ENCODE measurements at regions of chr3 and their contacts with region 1.

Region 1: GRCh38 chr3:24004171-24004938 is 59.3 kb downstream of the NR1D2 start:
- ATAC-seq: no peak
- H3K4me3 ChIP-seq: no peak overlapping the region
- H3K27ac ChIP-seq: no peak overlapping the region
- H3K4me1 ChIP-seq: no peaks in the 10 kb centered on the region

Region 2: GRCh38 chr3:24237971-24238767 is 233.8 kb after region 1 on chr3:
- in situ Hi-C with region 1: loop called in 3 of 9 experiments (anchors 10 to 25 kb)
- ATAC-seq: peak; percentile 76 to 90 (median 78)
- H3K4me3 ChIP-seq: no peak overlapping the region
- H3K27ac ChIP-seq: no peak overlapping the region
- H3K4me1 ChIP-seq: peaks cover 10% of the 10 kb centered on the region in 2 donors

Region 3: DNA sequence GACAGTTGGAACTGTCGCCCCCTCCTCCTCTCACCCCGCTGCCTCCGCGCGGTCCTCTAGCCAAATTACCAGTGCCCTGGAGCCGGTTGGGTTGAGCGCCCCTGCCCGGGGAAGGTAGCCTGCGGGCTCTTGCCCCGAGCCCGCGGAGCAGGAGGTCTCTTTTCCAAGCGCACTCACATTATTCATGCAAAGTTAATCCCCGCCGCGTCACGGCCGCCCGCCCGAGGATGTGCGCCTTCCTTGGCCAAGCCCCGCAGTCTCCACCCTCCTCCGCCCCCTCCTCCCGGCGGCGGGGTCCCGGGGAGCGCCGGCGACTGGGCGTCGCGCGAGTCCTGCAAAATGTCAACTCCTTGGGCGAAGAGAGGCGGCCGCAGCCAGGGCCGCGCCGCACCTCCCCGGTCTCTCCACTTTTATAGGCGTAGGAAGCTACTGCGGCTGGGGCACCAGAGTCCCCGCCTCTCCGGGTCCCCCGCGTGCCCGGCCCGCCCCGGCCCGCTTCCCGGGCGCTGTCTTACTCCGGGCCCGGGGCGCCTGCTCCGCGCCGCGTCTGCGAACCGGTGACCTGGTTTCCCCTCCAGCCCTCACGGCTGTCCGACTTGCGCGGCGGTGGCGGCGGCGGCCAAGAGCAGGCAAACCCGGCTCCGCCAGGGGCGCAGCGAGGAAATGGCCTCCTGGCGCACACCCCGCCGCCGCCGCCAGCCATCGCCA is 490.4 kb after region 1 on chr3 and contains the start of gene THRB:
- in situ Hi-C with region 1: loop called in 1 of 9 experiments (anchors 25 kb)
- ATAC-seq: peak; percentile 65 to 86 (median 81)
- H3K4me3 ChIP-seq: peak within 1 kb of the TSS; percentile 57 to 81 (median 66)
- H3K27ac ChIP-seq: no peak within 1 kb of the TSS
- H3K4me1 ChIP-seq: peaks cover 0 to 16% of the 10 kb centered on the region in 2 donors
- total RNA-seq, gene THRB: 0.42 to 26.4 (median 3.3) TPM

Region 4: GRCh38 chr3:24662449-24663345 is 658.3 kb after region 1 on chr3:
- in situ Hi-C with region 1: loop called in 1 of 9 experiments (anchors 25 kb)
- ATAC-seq: no peak
- H3K4me3 ChIP-seq: no peak overlapping the region
- H3K27ac ChIP-seq: no peak overlapping the region
- H3K4me1 ChIP-seq: peaks cover 0 to 6% of the 10 kb centered on the region in 2 donors

Region 5: DNA sequence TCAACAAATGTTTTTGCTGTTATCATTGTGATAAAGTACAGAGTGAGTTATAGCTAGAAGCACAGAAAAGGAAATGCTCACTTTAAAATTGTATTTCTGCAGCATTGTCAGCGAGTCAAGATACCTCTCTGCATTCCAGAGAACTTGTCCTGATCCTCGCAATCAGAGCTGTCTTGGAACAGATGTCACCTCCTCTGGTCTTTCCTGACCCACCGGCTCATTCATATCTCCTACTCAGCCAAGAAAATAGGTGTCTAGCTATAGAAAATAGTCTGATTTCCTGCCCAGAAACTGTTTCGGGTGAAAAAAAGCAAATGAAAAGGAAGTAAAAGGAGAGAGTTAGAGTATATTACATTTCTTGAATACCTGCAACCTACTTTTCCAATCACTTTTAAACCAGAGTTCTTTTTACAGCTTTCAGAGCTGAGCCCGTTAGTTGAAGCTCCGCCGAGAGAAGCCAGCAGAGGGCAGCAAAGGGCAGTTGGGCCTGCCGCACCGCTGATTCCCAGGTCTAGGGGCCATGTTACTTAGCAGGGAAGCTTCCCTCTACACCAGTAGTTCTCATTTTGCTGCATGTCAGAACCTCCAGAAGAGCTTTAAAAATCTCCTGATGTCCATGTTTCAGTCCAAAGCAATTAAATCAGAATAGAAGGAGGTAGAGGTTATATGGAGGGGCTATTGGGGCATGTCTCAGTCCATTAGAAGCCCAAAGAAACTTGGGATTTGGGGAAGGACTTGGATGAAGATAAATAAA is 676.0 kb after region 1 on chr3:
- in situ Hi-C with region 1: loop called in 2 of 9 experiments (anchors 10 to 25 kb)
- ATAC-seq: peak; percentile 54 to 82 (median 69)
- H3K4me3 ChIP-seq: no peak overlapping the region
- H3K27ac ChIP-seq: no peak overlapping the region
- H3K4me1 ChIP-seq: peaks cover 0 to 2% of the 10 kb centered on the region in 2 donors

Measured in motor neuron (in vitro differentiated cells).